ENCODE measurements at regions of chr7 and their contacts with region 1.

Region 1: GRCh38 chr7:43834463-43835251 is 34.7 kb downstream of the MRPS24 start:
- DNase-seq: no peak
- H3K4me3 ChIP-seq: no peak overlapping the region
- H3K27ac ChIP-seq: no peak overlapping the region
- H3K4me1 ChIP-seq: no peaks in the 10 kb centered on the region; a peak in 1 of 4 replicates
- H3K27me3 ChIP-seq: no peaks in the 10 kb centered on the region; the same call in 1 of the 2 replicates
- CTCF ChIP-seq: no peak
- EP300 ChIP-seq: no peak
- RAD21 ChIP-seq: no peak

Region 2: GRCh38 chr7:43124388-43124787 is 710.3 kb before region 1 on chr7:
- CTCF ChIA-PET with region 1: no interaction called
- POLR2A ChIA-PET with region 1: no interaction called
- DNase-seq: no peak
- H3K4me3 ChIP-seq: no peak overlapping the region
- H3K27ac ChIP-seq: no peak overlapping the region
- H3K4me1 ChIP-seq: no peaks in the 10 kb centered on the region
- H3K27me3 ChIP-seq: peaks cover 26% of the 10 kb centered on the region
- CTCF ChIP-seq: no peak
- EP300 ChIP-seq: no peak
- RAD21 ChIP-seq: no peak

Region 3: DNA sequence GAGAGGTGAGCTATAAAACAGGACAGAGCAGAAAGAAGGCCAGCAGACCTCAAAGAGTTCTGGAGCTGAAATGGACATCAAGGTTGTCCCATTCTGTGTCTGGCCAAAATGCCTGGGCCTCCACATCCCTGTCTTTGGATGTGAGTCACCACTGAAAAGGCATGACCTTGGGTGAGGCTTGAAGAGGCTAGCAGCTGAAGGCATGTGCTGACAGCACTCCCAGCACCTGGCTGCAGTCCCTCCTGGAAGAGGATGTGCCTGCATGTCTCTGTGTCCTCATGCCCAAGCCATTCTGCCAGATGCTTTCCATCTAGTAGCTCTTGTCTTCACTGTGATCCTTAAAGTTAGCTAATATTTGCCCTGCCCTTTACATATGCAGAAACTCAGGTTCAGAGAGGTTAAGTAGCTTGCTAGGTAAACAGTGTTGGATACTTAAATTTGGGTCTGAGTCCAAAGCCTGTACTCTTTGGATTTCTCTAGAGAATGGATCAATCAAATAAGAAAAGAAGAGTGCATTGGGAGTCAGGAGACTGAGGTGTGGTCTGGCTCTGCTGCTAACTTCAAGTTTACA is 686.4 kb before region 1 on chr7:
- CTCF ChIA-PET with region 1: no interaction called
- POLR2A ChIA-PET with region 1: no interaction called
- DNase-seq: no peak
- H3K4me3 ChIP-seq: no peak overlapping the region
- H3K27ac ChIP-seq: no peak overlapping the region
- H3K4me1 ChIP-seq: no peaks in the 10 kb centered on the region
- H3K27me3 ChIP-seq: peaks cover 14% of the 10 kb centered on the region; the same call in 1 of the 2 replicates
- CTCF ChIP-seq: no peak
- EP300 ChIP-seq: no peak
- RAD21 ChIP-seq: no peak

Region 4: DNA sequence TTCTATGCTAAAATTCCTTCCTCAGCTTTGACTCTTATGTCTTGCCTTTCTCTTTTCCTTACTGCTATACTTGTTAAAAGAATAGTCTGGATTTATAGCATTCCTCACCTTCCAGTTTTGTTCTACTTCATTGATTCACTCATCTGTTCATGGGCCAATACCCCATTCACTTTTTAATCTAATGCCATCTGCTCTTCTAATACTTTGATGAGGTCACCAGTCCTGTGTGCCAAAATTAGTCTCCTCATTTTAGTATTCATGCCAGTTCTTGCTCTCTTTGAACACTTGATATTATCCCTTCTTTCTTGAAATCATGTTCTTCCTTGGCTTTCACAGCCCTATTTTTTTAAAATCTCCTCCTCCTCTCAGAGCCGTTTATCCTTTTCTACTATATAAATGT is 232.4 kb before region 1 on chr7:
- CTCF ChIA-PET with region 1: interaction called, 21 read pairs
- POLR2A ChIA-PET with region 1: no interaction called
- DNase-seq: no peak
- H3K4me3 ChIP-seq: no peak overlapping the region
- H3K27ac ChIP-seq: no peak overlapping the region
- H3K4me1 ChIP-seq: no peaks in the 10 kb centered on the region; a peak in 1 of 4 replicates
- H3K27me3 ChIP-seq: no peaks in the 10 kb centered on the region
- CTCF ChIP-seq: no peak
- EP300 ChIP-seq: no peak
- RAD21 ChIP-seq: no peak

Region 5: GRCh38 chr7:43700059-43700501 is 134.6 kb before region 1 on chr7:
- CTCF ChIA-PET with region 1: interaction called, 53 read pairs
- POLR2A ChIA-PET with region 1: no interaction called
- DNase-seq: peak; percentile 59
- H3K4me3 ChIP-seq: peak overlapping the region in 1 of 2 experiments; percentile 10; a peak in 1 of 4 replicates
- H3K27ac ChIP-seq: peak overlapping the region in 1 of 2 experiments; percentile 74; a peak in 2 of 4 replicates
- H3K4me1 ChIP-seq: peaks cover 12 to 40% of the 10 kb centered on the region in 2 experiments; a peak in 3 of 4 replicates
- H3K27me3 ChIP-seq: no peaks in the 10 kb centered on the region
- CTCF ChIP-seq: peak; percentile 94
- EP300 ChIP-seq: no peak
- RAD21 ChIP-seq: peak; percentile 98

Region 6: DNA sequence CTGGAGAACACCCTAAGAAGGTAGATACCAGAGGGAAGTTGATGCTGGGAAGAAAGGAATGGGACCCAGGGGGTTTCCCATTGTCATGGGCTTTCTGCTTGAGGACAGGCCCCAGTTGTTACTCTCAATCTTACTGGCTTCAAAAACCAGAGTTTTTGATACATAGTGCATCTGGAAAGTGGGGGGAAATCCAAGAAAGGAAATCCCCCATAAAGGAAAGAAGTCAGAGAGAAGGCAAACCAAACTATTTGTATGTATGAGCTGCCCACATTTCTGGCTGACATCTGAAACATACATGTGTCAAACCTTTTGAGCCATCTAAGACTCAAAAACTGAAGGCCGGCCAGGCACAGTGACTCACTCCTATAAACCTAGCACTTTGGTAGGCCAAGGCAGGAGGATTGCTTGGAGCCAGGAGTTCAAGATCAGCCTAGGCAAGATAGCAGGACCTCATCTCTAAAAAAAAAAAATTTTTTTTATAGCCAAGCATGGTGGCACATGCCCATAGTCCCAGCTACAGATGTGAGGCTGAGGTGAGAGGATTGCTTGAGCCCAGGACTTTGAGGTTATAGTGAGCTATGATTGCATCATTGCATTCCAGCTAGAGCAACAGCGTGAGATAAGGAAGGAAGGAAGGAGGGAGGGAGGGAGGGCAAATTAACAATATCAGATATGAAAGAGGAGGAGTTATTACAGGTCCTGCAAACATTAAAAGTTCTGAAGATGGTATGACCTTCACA is 98.7 kb before region 1 on chr7:
- CTCF ChIA-PET with region 1: interaction called, 24 read pairs
- POLR2A ChIA-PET with region 1: no interaction called
- DNase-seq: no peak
- H3K4me3 ChIP-seq: no peak overlapping the region
- H3K27ac ChIP-seq: no peak overlapping the region
- H3K4me1 ChIP-seq: no peaks in the 10 kb centered on the region
- H3K27me3 ChIP-seq: no peaks in the 10 kb centered on the region
- CTCF ChIP-seq: no peak
- EP300 ChIP-seq: no peak
- RAD21 ChIP-seq: no peak

Region 7: DNA sequence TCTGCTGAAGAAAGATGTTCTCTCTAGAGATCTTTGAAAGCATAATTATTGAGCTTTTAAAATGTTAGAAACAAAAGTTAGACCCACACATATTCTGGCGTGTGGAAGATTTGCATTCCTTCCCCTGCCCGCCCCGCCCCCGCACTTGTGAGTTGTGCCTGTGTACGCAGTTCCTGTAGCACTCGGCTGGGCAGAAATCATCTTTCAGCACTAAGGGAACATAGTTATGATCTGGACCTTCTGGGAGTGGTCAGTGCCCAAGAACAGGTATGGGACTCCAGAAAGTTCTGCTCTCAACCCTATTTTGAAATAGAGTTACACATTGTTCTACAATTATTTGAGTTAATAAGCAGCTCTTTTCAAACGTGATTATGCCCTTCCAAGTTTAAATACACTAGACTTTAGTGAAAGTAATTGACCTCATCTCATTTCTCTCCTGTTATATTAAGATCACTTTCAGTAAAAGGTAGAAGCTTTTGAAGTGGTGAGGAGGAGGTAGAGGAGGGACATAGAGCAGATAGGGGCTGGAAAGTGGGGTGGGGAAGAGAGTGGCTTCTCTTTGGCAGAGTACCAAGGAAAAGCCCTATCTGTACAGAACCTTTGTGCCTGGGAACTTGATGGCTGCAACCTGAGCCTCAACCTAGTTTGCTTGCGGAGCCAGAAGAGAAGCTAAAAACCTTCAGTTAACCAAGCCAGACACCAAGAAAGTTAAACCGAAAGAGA is 70.5 kb before region 1 on chr7:
- CTCF ChIA-PET with region 1: interaction called, 19 read pairs
- POLR2A ChIA-PET with region 1: no interaction called
- DNase-seq: no peak
- H3K4me3 ChIP-seq: no peak overlapping the region
- H3K27ac ChIP-seq: no peak overlapping the region
- H3K4me1 ChIP-seq: peaks cover 14 to 34% of the 10 kb centered on the region in 2 experiments; a peak in 3 of 4 replicates
- H3K27me3 ChIP-seq: no peaks in the 10 kb centered on the region
- CTCF ChIP-seq: no peak
- EP300 ChIP-seq: no peak
- RAD21 ChIP-seq: no peak

Region 8: GRCh38 chr7:43864126-43864525 is 29.5 kb after region 1 on chr7:
- CTCF ChIA-PET with region 1: interaction called, 49 read pairs
- POLR2A ChIA-PET with region 1: no interaction called
- DNase-seq: no peak
- H3K4me3 ChIP-seq: no peak overlapping the region
- H3K27ac ChIP-seq: no peak overlapping the region
- H3K4me1 ChIP-seq: peaks cover 0 to 7% of the 10 kb centered on the region in 2 experiments; a peak in 2 of 4 replicates
- H3K27me3 ChIP-seq: peaks cover 8% of the 10 kb centered on the region; the same call in 1 of the 2 replicates
- CTCF ChIP-seq: no peak
- EP300 ChIP-seq: no peak
- RAD21 ChIP-seq: no peak

Region 9: DNA sequence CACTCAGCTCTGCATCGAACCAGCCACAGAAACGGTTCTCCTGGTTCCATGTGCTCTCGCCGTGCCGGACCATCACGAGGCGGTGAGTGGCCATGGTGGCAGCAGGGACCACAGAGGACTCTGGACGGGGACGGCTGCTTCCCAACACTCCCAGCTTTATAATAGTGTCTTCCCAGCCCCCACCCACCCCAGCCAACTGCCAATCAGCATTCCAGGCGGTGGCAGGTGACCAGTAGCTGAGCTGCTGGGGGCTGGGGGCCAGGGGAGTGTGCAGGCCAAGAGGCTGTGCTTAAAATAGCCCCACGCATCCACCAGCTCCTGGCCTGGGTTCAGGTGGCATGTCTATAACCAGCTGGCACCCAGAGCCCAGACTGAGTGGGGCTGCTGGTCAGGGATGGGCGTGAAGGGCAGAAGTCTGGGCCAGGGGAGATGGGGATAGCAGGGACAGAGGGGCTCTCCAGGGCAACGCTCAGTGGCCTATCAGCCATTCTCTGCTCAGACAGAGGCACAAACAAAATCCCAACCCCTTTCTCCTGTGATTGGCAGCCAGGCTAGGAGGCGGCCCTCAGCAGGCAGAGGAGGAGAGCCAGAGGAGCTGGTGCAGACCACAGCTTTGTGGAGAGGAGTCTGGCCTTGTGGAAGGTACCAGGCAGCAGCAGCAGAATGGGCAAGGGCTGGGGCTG is 230.9 kb after region 1 on chr7 and contains the start of gene PGAM2:
- CTCF ChIA-PET with region 1: no interaction called
- POLR2A ChIA-PET with region 1: no interaction called
- DNase-seq: peak; percentile 72
- H3K4me3 ChIP-seq: peak within 1 kb of the TSS in 1 of 2 experiments; percentile 13; a peak in 1 of 4 replicates
- H3K27ac ChIP-seq: peak within 1 kb of the TSS in 1 of 2 experiments; percentile 18; a peak in 1 of 4 replicates
- H3K4me1 ChIP-seq: peaks cover 4 to 43% of the 10 kb centered on the region in 2 experiments
- H3K27me3 ChIP-seq: no peaks in the 10 kb centered on the region
- CTCF ChIP-seq: no peak
- EP300 ChIP-seq: no peak
- RAD21 ChIP-seq: no peak
- polyA plus RNA-seq, gene PGAM2: 0.79 and 1.5 TPM in 2 replicates

Measured in SK-N-SH (cell line).